Head of caudate nucleus (tissue), 42 donors: ENCODE measurements at regions of chr10 and their contacts with region 1.

Region 1: DNA sequence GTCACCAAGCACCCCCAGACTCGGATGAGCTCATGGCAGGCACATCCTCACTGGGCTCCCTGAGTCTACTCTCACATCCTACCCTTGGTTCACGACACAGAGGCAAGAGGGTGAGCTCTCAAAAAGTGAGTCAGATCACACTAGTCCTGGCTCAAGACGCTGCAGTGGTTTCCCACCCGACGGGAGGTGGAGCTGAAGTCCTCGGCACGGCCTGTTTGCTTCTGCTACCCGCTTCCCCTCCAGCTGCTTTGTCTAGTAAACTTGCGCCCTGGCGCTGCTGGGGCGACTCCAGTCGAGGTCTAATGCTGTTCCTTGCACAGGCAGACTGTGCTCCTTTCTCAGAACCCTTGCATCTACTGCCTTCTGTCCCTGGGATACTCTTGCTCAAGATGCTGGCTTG is 13.5 kb upstream of the SFMBT2 start:
- DNase-seq: peak in 5 of 42 donors; percentile 22 to 55 (median 28)

Region 2: GRCh38 chr10:7111561-7111960 is 312.8 kb before region 1 on chr10:
- intact Hi-C with region 1: loop called (anchors 10 kb)
- DNase-seq: no peak

Region 3: DNA sequence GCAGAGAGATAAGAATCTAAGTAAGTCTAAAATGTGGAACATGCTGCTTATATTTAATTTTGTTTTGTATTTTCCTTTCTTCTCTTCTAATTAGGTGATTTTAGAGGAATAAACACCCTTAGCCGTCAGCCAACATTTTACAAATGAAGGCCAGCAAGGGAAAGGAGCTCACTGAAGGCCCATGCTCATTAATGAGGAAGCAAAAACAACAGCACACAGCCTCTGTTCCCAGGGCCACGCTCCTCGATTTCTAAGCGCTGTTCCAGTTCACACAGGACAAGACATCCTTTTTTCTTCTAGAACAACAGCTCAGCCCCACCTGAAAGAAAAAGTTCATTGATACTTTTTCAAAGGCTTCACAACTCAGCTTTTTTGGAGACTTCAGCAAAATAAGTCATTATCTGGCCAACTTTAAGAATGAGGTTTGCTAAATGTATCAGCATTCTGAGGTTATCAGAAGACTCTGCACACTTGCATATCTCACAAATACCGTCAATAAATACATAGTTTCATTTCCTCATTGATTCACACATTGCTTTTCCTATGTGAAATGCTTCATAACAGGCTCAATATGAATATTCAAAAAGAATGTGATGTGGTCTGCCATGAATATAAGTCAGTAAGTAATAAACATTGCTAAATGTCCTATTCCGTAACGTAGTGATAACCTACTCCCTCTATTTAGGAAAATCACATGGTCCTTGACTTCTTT is 21.3 kb after region 1 on chr10:
- intact Hi-C with region 1: no loop called
- DNase-seq: peak in 22 of 42 donors; percentile 21 to 60 (median 34)

Region 4: DNA sequence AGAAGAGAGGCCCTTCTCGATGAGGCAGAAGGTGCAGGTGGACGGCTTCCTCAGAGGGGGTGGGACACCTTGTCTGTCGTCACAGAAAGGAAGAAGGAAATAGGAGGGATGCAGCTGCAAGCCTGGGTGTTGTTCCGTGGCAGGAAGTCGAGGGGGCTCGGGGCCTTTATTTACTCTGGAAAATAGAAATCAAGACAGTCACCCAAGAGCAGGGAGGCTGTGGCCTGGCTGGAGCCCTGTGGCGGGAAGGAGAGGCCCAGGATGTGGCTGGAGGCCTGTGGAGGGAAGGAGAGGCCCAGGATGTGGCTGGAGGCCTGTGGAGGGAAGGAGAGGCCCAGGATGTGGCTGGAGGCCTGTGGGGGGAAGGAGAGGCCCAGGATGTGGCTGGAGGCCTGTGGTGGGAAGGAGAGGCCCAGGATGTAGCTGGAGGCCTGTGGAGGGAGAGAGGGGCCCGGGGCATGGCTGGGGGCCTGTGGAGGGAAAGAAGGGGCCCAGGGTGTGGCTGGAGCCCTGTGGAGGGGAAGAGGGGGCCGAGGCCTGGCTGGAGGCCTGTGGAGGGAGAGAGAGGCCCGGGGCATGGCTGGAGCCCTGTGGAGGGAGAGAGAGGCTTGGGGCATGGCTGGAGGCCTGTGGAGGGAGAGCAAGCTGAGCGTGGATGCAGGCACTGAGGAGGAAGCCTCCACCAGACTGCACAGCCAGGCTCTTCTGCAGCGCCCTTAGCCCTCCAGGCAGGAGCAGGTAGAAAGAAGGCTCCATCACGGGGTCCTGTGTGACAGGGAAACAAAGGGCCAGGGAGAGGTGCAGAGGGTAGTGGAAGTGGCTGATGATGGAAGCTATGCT is 83.8 kb after region 1 on chr10:
- intact Hi-C with region 1: no loop called
- DNase-seq: no peak